Activated T-helper 2 cell treated with anti-CD3 and anti-CD28 coated beads, Interferon-gamma antibody, Interleukin-2, Interleukin-4, amounts not matched to agents 10 μg/mL and 5 μg/mL and 100 μg/mL, durations not matched to agents 14 hours and 24 hours and 36 hours (primary cell): ENCODE measurements at regions of chr13 and their contacts with region 1.

Region 1: GRCh38 chr13:79522583-79522982 is 41.6 kb downstream of the NDFIP2 start:
- DNase-seq: peak; percentile 58
- H3K4me3 Mint-ChIP-seq: peak overlapping the region; percentile 57
- H3K27ac Mint-ChIP-seq: peak overlapping the region; percentile 89
- H3K4me1 Mint-ChIP-seq: peaks cover 39% of the 10 kb centered on the region
- H3K27me3 Mint-ChIP-seq: no peaks in the 10 kb centered on the region

Region 2: DNA sequence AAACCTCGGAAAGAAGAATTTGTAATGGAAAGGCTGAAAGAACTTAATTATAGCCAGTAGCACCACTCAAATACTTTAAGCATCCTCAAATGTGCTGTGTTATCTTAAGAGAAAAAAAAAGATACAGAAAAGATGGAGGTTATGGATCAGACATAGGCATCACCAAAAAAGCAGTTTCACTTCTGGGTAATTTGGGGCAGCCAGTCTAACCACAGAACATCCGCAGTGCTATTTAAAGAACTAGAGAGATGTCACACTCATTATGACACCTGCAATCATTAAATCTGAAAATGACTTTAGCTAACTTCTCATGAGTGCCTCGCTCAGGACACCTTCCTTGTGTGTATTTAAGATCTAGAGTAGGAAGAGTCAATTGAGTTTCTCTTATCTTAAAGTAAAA is 328.3 kb before region 1 on chr13:
- intact Hi-C with region 1: loop called (anchors 10 kb)
- DNase-seq: peak; percentile 63
- H3K4me3 Mint-ChIP-seq: no peak overlapping the region
- H3K27ac Mint-ChIP-seq: no peak overlapping the region
- H3K4me1 Mint-ChIP-seq: peaks cover 51% of the 10 kb centered on the region
- H3K27me3 Mint-ChIP-seq: peaks cover 15% of the 10 kb centered on the region

Region 3: DNA sequence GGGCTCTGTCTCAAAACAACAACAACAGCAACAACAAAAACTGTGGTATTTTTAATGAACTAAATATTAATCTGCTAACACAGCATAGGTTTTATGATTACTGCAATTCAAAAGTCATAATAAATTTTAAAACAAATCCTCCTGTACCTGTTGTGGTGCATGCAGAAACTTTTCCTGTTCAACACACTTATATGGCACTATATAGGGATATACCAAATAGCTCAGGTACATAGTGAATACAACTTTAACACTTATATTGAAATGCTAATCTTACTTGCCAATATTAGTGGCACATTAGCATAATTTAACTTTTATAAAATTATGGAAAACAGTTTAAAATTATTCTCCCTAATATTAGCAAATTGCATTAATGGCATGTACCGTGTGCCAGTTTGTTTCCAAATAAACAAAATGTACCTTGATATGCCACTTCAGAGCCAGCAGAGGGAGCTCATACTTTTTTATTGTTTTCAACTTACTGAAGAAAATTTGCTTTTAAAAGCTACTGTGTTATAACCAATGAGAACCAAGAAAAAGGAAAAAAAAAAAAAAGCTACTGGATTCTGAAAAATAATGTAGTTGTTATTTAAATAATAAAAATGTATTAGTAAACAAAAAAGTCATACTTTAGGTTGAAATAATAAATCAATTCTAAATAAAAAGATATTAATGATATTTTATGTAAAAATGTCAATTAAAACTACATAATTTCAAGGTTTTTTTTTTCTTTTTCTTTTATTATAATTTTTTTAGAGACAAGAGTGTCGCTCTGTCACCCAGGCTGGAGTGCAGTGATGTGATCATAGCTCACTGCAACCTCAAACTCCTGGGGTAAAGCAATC is 98.6 kb before region 1 on chr13:
- intact Hi-C with region 1: loop called (anchors 5 kb)
- DNase-seq: no peak
- H3K4me3 Mint-ChIP-seq: no peak overlapping the region
- H3K27ac Mint-ChIP-seq: no peak overlapping the region
- H3K4me1 Mint-ChIP-seq: peaks cover 26% of the 10 kb centered on the region
- H3K27me3 Mint-ChIP-seq: no peaks in the 10 kb centered on the region

Region 4: DNA sequence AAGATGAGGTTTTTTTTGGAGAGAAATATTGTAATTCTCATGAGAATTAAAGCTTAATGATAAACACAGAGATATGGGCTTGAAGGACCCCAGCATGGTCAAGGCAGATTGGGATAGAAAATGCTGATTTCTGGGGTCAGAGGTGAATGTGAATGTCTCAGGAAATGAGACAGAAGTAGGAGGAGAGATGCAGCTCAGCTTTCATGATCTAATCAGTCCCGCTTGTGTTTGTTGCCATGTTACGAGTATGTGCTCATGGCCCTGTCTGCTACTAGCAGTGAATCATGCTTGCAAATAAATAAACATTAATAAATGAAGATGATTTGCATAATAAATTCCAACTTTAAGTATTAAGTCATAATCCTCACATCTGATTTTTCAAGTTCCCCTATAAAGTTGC is 64.6 kb before region 1 on chr13:
- intact Hi-C with region 1: loop called (anchors 1 kb)
- DNase-seq: no peak
- H3K4me3 Mint-ChIP-seq: no peak overlapping the region
- H3K27ac Mint-ChIP-seq: peak overlapping the region; percentile 77
- H3K4me1 Mint-ChIP-seq: peaks cover 66% of the 10 kb centered on the region
- H3K27me3 Mint-ChIP-seq: no peaks in the 10 kb centered on the region

Region 5: DNA sequence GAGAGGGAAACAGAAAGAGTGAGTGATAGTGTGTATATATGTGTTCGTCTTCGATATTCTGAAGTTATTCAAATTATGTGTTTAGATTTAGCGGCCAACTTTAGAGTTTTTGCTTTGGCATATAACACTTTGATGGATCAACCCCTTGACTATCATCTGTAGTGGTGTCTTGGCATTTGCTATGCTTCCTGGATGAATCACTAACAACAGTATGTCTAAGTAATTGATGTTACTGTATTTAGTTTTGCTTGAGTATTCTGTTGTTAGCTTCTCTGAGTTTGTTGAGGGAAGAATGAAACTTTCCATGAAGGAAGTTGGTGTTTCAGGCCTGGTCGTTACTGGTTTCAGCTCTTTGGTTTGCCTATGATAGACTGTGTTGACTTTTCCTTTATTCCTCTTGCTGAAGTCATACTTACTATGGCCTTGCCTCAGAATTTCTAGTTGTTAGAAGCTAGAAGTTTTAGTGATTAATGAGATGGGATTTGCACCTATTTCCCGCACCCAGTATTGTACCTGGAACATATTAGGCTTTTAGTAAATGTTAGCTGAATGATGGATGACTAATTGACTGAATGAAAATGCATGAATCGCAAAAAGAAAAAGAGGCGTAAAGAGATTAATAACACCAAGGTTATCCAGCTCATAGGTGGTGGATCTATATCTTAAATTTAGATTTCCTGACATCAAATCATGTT is 20.9 kb before region 1 on chr13:
- intact Hi-C with region 1: loop called (anchors 1 kb)
- DNase-seq: no peak
- H3K4me3 Mint-ChIP-seq: peak overlapping the region; percentile 43
- H3K27ac Mint-ChIP-seq: peak overlapping the region; percentile 80
- H3K4me1 Mint-ChIP-seq: peaks cover 87% of the 10 kb centered on the region
- H3K27me3 Mint-ChIP-seq: no peaks in the 10 kb centered on the region